Transverse colon (tissue), 4 donors: ENCODE measurements at regions of chr1 and their contacts with region 1.

Region 1: GRCh38 chr1:41241782-41242341 is at the start of gene SCMH1:
- DNase-seq: peak; percentile 56
- H3K4me3 ChIP-seq: peak within 1 kb of the TSS; percentile 85 to 98 (median 91)
- H3K27ac ChIP-seq: peak within 1 kb of the TSS; percentile 95 to 99 (median 98)
- H3K4me1 ChIP-seq: peaks cover 9 to 53% (median 31%) of the 10 kb centered on the region in 4 donors
- H3K27me3 ChIP-seq: no peaks in the 10 kb centered on the region
- CTCF ChIP-seq: no peak
- EP300 ChIP-seq: no peak
- POLR2A ChIP-seq: no peak
- total RNA-seq, gene SCMH1: 24.5 to 66.8 (median 49.1) TPM

Region 2: DNA sequence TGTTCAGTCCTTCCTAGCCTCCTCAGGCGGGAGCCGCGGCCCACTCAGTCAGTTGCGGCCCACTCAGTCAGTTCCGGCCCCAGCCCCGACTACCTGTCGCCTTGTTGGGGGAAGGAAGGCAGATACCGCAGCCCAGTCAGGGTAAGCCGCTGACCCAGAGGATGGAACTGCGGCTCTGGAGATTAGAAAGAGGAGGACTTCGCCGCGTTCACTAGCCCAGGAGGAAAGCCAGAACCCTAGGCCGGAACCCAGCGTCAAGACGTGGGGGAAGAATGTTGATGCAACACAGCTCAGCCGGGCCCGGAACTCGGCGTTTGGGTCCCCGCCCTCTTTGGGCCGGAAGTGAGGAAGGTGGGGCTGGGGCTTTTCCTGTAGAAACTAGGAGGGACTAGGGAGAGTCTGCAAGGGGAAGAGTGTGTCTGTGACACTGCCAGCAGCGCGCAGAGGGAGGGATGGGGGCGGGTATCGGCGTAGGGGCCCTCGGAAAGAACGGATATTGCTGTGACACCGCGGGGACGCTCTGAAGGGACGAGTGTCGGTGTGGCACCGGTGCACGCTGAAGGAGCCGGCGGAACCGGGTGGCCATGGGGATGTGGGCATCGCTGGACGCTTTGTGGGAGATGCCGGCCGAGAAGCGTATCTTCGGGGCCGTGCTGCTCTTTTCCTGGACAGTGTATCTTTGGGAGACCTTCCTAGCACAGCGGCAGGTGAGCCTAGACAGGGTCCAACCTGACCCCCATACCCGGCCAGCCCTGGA is 984.0 kb before region 1 on chr1 and contains the start of gene ZMPSTE24:
- in situ Hi-C with region 1: no loop called
- intact Hi-C with region 1: no loop called
- DNase-seq: peak; percentile 96
- H3K4me3 ChIP-seq: peak within 1 kb of the TSS; percentile 49 to 87 (median 73)
- H3K27ac ChIP-seq: peak within 1 kb of the TSS; percentile 91 to 96 (median 96)
- H3K4me1 ChIP-seq: peaks cover 6 to 31% (median 22%) of the 10 kb centered on the region in 4 donors
- H3K27me3 ChIP-seq: no peaks in the 10 kb centered on the region
- CTCF ChIP-seq: peak in 1 of 5 experiments; percentile 5
- EP300 ChIP-seq: no peak
- POLR2A ChIP-seq: peak; percentile 63
- total RNA-seq, gene ZMPSTE24: 3.4 to 40.8 (median 23.7) TPM

Region 3: GRCh38 chr1:41045740-41046139 is 196.1 kb before region 1 on chr1:
- in situ Hi-C with region 1: loop called in 1 of 4 experiments (anchors 25 kb)
- intact Hi-C with region 1: no loop called
- DNase-seq: peak; percentile 51
- H3K4me3 ChIP-seq: no peak overlapping the region
- H3K27ac ChIP-seq: peak overlapping the region; percentile 64 to 76 (median 66)
- H3K4me1 ChIP-seq: peaks cover 7 to 30% (median 16%) of the 10 kb centered on the region in 4 donors
- H3K27me3 ChIP-seq: no peaks in the 10 kb centered on the region
- CTCF ChIP-seq: no peak
- EP300 ChIP-seq: no peak
- POLR2A ChIP-seq: no peak

Region 4: GRCh38 chr1:41109316-41110197 is 132.3 kb before region 1 on chr1:
- in situ Hi-C with region 1: no loop called
- intact Hi-C with region 1: loop called (anchors 10 kb)
- DNase-seq: peak; percentile 20
- H3K4me3 ChIP-seq: no peak overlapping the region
- H3K27ac ChIP-seq: peak overlapping the region; percentile 74 to 89 (median 80)
- H3K4me1 ChIP-seq: peaks cover 15 to 26% (median 23%) of the 10 kb centered on the region in 4 donors
- H3K27me3 ChIP-seq: no peaks in the 10 kb centered on the region
- CTCF ChIP-seq: no peak
- EP300 ChIP-seq: peak; percentile 81
- POLR2A ChIP-seq: no peak